Activated T-helper 1 cell treated with anti-CD3 and anti-CD28 coated beads, Interleukin-12 subunit alpha, Interleukin-12 subunit beta, Interleukin-2, Interleukin-4 antibody, amounts not matched to agents 30 ng/mL and 10 ng/mL and 1 ng/mL, durations not matched to agents 14 hours and 24 hours and 36 hours (primary cell): ENCODE measurements at regions of chr2 and their contacts with region 1.

Region 1: DNA sequence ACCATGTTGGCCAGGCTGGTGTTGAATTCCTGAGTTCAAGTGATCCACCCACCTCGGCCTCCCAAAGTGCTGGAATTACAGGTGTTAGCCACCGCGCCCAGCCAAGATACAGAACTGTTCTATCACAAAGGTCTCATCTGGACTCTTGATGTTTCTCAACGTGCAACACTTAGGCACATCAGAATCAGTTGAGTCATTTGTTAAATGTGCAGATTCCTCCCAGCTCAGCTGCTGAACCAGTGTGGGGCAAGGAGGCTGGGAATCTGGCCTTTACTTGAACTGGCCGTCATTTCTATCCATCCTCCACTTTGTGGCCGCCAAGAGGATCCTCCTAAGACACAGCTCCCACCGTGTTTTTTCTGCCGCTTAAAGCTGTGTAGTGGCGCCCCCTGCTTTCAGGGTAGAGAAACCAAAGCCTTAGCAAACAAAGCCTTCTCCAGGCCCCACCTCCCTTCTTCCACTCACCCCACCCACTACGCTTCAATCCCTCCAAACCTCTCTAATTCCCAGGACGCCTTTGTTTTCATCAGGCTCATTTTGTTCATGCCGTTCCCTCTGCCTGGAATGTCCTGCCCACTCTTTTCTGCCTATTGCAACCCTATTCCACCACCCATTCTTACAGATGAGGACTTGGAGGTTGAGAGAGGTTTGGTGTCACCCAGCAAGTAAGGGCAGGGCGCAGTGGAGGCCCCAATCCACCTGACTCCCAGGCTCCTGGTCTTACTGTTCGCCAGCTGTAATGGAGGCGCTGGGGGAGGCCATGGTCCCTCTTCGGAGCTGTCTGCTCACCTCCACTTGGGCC is 776 bp upstream of the SPEG start:
- DNase-seq: no peak
- H3K4me3 Mint-ChIP-seq: no peak overlapping the region
- H3K27ac Mint-ChIP-seq: no peak overlapping the region
- H3K4me1 Mint-ChIP-seq: no peaks in the 10 kb centered on the region
- H3K27me3 Mint-ChIP-seq: peaks cover 28% of the 10 kb centered on the region

Region 2: GRCh38 chr2:219277703-219278654 is 155.9 kb before region 1 on chr2:
- intact Hi-C with region 1: no loop called
- DNase-seq: peak; percentile 67
- H3K4me3 Mint-ChIP-seq: peak overlapping the region; percentile 73
- H3K27ac Mint-ChIP-seq: peak overlapping the region; percentile 93
- H3K4me1 Mint-ChIP-seq: peaks cover 45% of the 10 kb centered on the region
- H3K27me3 Mint-ChIP-seq: peaks cover 4% of the 10 kb centered on the region

Region 3: DNA sequence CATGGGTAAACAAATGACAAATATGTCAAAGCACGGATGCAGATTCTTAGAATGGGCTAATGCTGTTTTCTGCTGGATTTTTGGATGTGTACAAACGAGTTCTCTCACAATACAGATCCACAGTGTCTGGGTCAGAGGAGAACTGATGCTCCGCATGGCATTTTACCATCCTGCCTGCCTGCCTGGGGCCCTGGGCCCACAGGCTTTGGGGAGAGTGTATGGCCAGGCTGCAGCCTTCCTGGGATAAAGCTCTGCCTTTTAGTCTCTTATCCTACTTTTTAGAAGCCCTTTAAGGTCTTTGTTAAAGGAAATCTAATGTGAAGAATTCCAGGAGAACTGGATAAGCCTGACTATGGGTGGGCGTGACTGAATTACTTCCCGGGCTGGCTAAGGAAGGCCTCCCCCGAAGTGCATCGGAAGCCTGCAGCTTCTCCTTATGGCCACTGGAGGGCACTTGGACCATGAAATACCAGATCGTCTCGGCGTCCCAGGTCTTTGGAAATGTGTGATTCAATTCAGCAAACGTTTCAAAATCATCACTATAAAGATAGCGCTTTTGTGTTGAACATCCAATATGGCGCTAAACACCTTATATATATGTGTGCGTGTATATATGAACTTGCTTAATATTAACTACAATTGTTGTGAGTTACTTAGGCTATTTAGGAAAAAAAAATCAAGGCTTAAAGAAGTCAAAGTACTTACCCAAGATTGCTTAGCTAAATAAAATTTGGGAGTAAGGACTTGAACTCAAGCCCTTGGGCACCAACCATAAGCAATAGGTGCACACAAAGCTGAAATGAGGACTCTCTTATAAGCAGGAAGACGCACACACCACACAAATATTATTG is 31.0 kb before region 1 on chr2:
- intact Hi-C with region 1: loop called (anchors 1 kb)
- DNase-seq: peak; percentile 45
- H3K4me3 Mint-ChIP-seq: no peak overlapping the region
- H3K27ac Mint-ChIP-seq: no peak overlapping the region
- H3K4me1 Mint-ChIP-seq: no peaks in the 10 kb centered on the region
- H3K27me3 Mint-ChIP-seq: peaks cover 14% of the 10 kb centered on the region